Right cardiac atrium (tissue), 5 donors: ENCODE measurements at regions of chr1 and their contacts with region 1.

Region 1: DNA sequence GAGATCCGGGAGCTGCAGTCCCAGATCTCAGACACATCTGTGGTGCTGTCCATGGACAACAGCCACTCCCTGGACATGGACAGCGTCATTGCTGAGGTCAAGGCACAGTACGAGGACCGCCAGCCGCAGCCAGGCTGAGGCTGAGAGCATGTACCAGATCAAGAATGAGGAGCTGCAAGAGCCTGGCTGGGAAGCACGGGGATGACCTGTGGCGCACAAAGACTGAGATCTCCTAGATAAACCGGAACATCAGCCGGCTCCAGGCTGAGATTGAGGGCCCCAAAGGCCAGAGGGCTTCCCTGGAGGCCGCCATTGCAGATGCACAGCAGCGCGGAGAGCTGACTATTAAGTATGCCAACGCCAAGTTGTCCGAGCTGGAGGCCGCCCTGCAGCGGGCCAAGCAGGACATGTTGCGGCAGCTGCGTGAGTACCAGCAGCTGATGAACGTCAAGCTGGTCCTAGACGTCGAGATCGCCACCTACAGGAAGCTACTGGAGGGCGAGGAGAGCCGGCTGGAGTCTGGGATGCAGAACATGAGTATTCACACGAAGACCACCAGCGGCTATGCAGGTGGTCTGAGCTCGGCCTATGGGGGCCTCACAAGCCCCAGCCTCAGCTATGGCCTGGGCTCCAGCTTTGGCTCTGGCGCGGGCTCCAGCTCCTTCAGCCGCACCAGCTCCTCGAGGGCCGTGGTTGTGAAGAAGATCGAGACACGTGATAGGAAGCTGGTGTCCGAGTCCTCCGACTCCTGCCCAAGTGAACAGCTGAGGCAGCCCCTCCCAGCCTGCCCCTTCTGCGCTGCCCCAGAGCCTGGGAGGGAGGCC is 25.5 kb downstream of the ETV3L start:
- DNase-seq: peak; percentile 79 to 89 (median 87)
- ATAC-seq: peak in 1 of 2 donors; percentile 47
- H3K4me3 ChIP-seq: no peak overlapping the region
- H3K27ac ChIP-seq: no peak overlapping the region
- H3K4me1 ChIP-seq: no peaks in the 10 kb centered on the region
- H3K27me3 ChIP-seq: no peaks in the 10 kb centered on the region

Region 2: GRCh38 chr1:156936721-156937220 is 137.4 kb before region 1 on chr1:
- intact Hi-C with region 1: no loop called
- DNase-seq: no peak
- ATAC-seq: no peak
- H3K4me3 ChIP-seq: no peak overlapping the region
- H3K27ac ChIP-seq: no peak overlapping the region
- H3K4me1 ChIP-seq: no peaks in the 10 kb centered on the region
- H3K27me3 ChIP-seq: no peaks in the 10 kb centered on the region

Region 3: DNA sequence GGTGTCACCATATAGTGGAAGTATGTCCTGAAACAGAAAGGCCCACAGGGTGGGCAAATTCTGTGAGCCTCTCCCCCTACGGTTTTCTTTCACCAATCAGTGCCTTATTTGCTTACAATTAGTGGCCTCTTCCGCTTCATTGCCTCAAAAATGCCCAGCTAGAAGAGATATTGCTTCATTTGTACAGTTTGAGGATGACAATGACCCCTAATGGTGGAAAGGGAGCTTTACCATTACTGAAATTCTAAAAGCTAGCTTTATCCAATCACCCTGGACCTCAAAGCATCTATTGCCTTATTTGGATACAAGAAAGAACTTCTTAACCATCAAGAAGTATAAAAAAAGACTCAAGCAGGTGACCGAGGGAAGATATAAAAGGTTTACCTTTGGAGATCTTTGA is 104.1 kb before region 1 on chr1:
- intact Hi-C with region 1: loop called in 1 of 4 experiments (anchors 10 kb)
- DNase-seq: no peak
- ATAC-seq: no peak
- H3K4me3 ChIP-seq: no peak overlapping the region
- H3K27ac ChIP-seq: no peak overlapping the region
- H3K4me1 ChIP-seq: no peaks in the 10 kb centered on the region
- H3K27me3 ChIP-seq: no peaks in the 10 kb centered on the region

Region 4: DNA sequence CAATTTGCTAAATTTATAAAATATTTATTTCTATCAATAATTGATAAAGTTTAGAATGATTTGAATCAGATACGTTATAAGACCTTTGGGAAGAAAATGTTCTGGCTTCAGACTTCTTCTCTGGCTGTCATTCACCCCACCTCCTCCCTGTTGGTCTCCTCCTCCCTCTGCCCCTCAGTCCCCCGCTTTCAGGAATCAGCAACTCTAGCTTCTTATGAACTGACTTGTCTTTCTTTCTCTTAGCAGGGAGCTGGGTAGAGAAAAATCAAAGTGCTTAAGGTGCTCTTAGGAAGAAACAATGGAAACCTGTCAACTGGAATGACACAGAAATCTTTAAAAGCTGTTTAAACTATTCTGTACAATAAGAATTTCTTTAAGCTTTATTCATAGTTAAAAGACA is 135.4 kb after region 1 on chr1:
- intact Hi-C with region 1: no loop called
- DNase-seq: no peak
- ATAC-seq: no peak
- H3K4me3 ChIP-seq: no peak overlapping the region
- H3K27ac ChIP-seq: no peak overlapping the region
- H3K4me1 ChIP-seq: peaks cover 1% of the 10 kb centered on the region
- H3K27me3 ChIP-seq: no peaks in the 10 kb centered on the region